HCT116 (cell line): ENCODE measurements at regions of chr5 and their contacts with region 1.

Region 1: DNA sequence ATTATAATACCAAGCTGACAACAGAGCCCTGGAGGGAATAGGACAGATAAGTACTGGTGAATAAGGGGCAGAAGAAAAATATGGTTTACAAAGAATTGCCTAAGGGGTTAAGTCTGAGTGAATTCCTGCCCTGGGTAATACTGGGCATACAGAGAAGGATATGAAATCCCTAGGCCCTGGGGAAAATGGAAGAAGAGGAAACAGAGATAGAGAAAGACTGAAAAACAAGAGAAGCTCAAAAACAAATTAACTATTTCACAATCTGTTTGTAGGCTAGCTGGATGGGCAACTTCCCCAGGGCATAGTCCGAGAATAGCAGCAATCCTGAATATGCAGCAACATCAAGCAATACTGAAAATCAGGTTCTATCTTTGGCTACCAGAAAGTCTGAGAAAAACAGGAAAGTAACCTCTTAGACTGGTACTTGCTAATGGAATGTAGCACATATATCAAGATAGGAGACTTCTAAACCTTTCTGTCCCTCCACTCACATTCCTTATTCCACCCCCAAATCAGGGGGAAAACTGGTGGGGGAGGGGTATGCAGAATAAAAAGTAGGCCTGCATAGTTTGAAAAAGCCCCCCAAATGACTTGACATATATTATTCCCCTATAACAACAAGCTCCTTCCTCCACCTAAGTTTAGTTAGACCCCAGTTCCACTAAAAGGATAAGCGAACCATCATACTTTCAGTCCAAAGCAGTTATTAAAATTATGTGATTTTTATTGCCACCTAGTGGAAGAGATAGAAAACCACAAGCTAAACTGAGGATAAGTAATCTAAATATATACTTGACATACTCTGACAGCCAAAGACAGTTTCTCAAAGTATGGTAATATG is 20.6 kb downstream of the SLC38A9 start:
- DNase-seq: peak; percentile 33
- ATAC-seq: peak; percentile 63; the same call in 1 of the 2 replicates
- H3K4me3 ChIP-seq: no peak overlapping the region
- H3K27ac ChIP-seq: no peak overlapping the region
- H3K4me1 ChIP-seq: no peaks in the 10 kb centered on the region
- H3K27me3 ChIP-seq: no peaks in the 10 kb centered on the region
- CTCF ChIP-seq: peak; percentile 46 to 76 (median 68); a peak in 5 of 6 replicates
- POLR2A ChIP-seq: no peak
- RAD21 ChIP-seq: peak; percentile 82

Region 2: DNA sequence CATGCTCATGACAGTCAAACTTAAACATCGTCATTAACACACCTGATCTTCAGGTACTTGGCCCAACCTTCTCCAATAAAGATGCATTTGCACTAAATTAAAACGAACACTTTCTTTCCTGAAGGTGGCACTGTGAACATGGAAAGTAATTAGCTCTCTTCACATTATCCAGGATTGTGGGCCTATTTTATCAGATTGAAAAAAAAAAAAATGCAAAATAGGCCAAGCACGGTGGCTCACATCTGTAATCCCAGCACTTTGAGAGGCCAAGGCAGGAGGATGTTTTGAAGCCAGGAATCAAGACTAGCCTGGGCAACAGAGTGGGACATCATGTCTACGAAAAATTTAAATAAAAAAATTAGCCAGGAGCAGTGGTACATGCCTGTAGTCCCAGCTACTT is 504.1 kb before region 1 on chr5:
- CTCF ChIA-PET with region 1: interaction called, 9 read pairs
- POLR2A ChIA-PET with region 1: no interaction called
- RAD21 ChIA-PET with region 1: no interaction called
- intact Hi-C with region 1: loop called (anchors 1 kb)
- DNase-seq: peak; percentile 57
- ATAC-seq: peak; percentile 95
- H3K4me3 ChIP-seq: no peak overlapping the region
- H3K27ac ChIP-seq: no peak overlapping the region
- H3K4me1 ChIP-seq: no peaks in the 10 kb centered on the region
- H3K27me3 ChIP-seq: no peaks in the 10 kb centered on the region
- CTCF ChIP-seq: peak; percentile 44 to 57 (median 47); a peak in 4 of 6 replicates
- POLR2A ChIP-seq: no peak
- RAD21 ChIP-seq: peak; percentile 80

Region 3: DNA sequence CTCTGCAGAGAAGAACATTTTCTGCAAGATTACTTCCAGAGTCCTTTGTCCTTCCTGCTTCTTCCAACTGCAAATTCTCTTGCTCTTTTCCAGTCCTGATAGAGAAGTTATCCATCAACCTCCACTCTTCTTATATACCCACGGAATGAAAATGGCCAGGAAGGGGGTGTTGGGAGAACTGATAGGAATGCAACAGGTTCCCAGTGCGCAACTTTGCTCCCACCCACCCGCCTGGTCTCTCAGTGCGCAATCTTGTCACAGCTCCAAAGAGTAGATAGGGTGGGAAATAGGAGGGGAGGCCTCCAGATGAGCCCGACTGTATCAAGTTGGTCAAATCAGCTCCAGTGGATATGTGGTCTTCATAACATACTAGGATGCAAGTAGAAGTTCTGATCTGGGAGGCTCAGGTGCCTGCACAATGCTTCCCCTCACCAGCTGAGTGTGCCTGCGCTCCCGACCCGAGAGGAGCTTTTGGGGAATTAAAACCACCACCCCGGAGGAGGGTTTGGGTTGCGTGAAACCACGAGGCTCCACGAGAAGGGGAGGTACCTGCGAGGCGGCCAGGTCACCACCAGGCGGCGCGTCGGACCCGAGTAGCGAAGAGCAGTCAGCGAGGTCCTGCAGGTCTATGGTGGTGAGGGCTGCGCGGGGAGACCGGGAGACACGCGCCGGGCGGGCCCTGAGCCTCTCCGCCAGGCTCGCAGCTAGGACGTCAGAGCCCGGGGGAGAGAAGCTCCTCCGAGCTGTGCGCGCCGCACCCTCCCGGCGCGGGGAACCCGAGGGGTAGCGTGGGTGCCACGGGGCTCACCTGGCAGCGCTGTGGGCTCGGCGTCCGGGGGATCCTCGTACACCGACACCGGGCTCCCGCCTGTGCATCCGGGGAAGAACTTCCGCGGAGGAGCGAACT is 465.2 kb before region 1 on chr5:
- CTCF ChIA-PET with region 1: interaction called, 8 read pairs
- POLR2A ChIA-PET with region 1: no interaction called
- RAD21 ChIA-PET with region 1: interaction called in 1 of 2 experiments, 3 read pairs
- intact Hi-C with region 1: loop called (anchors 2 kb)
- DNase-seq: peak; percentile 72
- ATAC-seq: peak; percentile 85
- H3K4me3 ChIP-seq: peak overlapping the region; percentile 62 to 75
- H3K27ac ChIP-seq: peak overlapping the region; percentile 92
- H3K4me1 ChIP-seq: peaks cover 10 to 19% of the 10 kb centered on the region in 2 experiments
- H3K27me3 ChIP-seq: no peaks in the 10 kb centered on the region
- CTCF ChIP-seq: peak in 2 of 3 experiments; percentile 83 to 92; a peak in 4 of 6 replicates
- POLR2A ChIP-seq: peak; percentile 71
- RAD21 ChIP-seq: no peak

Region 4: DNA sequence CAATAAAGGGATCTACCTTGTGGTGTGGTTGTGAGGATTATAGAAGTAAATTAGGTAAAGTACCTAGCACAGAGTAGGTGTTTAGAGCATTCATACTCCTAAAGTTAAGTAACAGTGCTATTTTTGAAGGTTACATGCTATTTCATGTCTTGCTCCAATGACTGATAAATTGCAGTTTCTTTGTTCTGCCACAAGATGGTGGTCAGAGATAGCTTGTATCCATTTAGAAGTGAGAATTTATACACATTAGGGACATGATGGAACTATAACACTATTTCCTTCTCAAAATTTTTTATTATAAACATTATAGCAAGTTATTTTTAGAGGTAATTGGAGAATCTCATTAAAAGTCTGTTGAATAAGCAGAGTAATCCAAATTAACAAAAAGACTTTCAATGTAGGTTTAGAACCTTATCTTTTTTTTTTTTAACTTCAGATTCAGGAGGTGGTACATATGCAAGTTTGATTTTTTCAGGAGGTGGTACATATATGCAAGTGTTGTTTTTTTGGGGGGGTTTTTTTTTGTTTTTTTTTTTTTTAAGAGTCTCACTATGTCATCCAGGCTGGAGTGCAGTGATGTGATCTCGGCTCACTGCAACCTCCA is 366.6 kb before region 1 on chr5:
- CTCF ChIA-PET with region 1: interaction called, 13 read pairs
- POLR2A ChIA-PET with region 1: no interaction called
- RAD21 ChIA-PET with region 1: no interaction called
- intact Hi-C with region 1: loop called (anchors 1 kb)
- DNase-seq: peak; percentile 32
- ATAC-seq: peak; percentile 72
- H3K4me3 ChIP-seq: no peak overlapping the region
- H3K27ac ChIP-seq: no peak overlapping the region
- H3K4me1 ChIP-seq: no peaks in the 10 kb centered on the region
- H3K27me3 ChIP-seq: no peaks in the 10 kb centered on the region
- CTCF ChIP-seq: peak; percentile 42 to 70 (median 48); a peak in 5 of 6 replicates
- POLR2A ChIP-seq: no peak
- RAD21 ChIP-seq: peak; percentile 69

Region 5: DNA sequence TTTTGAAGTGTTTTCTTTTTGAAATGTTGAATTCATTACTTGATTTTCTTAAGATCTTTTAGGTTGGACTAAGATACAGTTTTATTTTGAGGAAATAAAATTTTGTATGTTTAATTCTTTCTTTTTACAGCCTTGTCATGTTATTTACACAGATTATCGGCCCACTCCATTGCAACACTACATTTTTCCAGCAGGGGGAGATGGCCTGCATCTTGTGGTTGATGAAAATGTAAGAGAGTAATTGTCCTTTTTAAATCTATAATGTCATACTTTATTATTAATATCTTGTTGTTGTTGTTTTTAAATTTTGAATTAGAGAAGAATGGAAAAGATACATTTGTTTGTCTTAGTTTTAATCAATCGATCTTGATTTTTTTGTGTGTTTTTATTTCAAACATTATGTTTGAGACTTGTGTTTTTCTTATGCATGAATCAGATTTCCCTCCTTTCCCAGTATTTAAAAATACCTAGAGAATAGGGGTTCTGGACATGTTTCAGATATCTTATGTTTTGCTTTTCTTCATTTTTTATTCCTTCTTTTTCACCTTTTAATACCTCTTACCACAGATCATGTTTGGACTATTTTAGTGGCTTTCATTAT is 347.0 kb before region 1 on chr5:
- CTCF ChIA-PET with region 1: interaction called, 6 read pairs
- POLR2A ChIA-PET with region 1: no interaction called
- RAD21 ChIA-PET with region 1: no interaction called
- intact Hi-C with region 1: loop called (anchors 1 kb)
- DNase-seq: peak; percentile 36
- ATAC-seq: peak; percentile 47; the same call in 1 of the 2 replicates
- H3K4me3 ChIP-seq: no peak overlapping the region
- H3K27ac ChIP-seq: no peak overlapping the region
- H3K4me1 ChIP-seq: no peaks in the 10 kb centered on the region
- H3K27me3 ChIP-seq: no peaks in the 10 kb centered on the region
- CTCF ChIP-seq: peak; percentile 48 to 83 (median 72); a peak in 5 of 6 replicates
- POLR2A ChIP-seq: no peak
- RAD21 ChIP-seq: peak; percentile 58

Region 6: GRCh38 chr5:55407059-55407684 is 284.3 kb before region 1 on chr5:
- CTCF ChIA-PET with region 1: interaction called, 19 read pairs
- POLR2A ChIA-PET with region 1: no interaction called
- RAD21 ChIA-PET with region 1: no interaction called
- intact Hi-C with region 1: loop called (anchors 1 kb)
- DNase-seq: peak; percentile 22
- ATAC-seq: peak; percentile 84
- H3K4me3 ChIP-seq: no peak overlapping the region
- H3K27ac ChIP-seq: no peak overlapping the region
- H3K4me1 ChIP-seq: no peaks in the 10 kb centered on the region
- H3K27me3 ChIP-seq: no peaks in the 10 kb centered on the region
- CTCF ChIP-seq: peak; percentile 50 to 75 (median 72); a peak in 5 of 6 replicates
- POLR2A ChIP-seq: no peak
- RAD21 ChIP-seq: peak; percentile 69

Region 7: GRCh38 chr5:55903121-55903701 is 211.7 kb after region 1 on chr5:
- CTCF ChIA-PET with region 1: no interaction called
- POLR2A ChIA-PET with region 1: no interaction called
- RAD21 ChIA-PET with region 1: no interaction called
- intact Hi-C with region 1: no loop called
- DNase-seq: no peak
- ATAC-seq: no peak
- H3K4me3 ChIP-seq: no peak overlapping the region
- H3K27ac ChIP-seq: no peak overlapping the region
- H3K4me1 ChIP-seq: peaks cover 0 to 16% of the 10 kb centered on the region in 2 experiments; a peak in 2 of 4 replicates
- H3K27me3 ChIP-seq: no peaks in the 10 kb centered on the region
- CTCF ChIP-seq: no peak
- POLR2A ChIP-seq: no peak
- RAD21 ChIP-seq: no peak

Region 8: DNA sequence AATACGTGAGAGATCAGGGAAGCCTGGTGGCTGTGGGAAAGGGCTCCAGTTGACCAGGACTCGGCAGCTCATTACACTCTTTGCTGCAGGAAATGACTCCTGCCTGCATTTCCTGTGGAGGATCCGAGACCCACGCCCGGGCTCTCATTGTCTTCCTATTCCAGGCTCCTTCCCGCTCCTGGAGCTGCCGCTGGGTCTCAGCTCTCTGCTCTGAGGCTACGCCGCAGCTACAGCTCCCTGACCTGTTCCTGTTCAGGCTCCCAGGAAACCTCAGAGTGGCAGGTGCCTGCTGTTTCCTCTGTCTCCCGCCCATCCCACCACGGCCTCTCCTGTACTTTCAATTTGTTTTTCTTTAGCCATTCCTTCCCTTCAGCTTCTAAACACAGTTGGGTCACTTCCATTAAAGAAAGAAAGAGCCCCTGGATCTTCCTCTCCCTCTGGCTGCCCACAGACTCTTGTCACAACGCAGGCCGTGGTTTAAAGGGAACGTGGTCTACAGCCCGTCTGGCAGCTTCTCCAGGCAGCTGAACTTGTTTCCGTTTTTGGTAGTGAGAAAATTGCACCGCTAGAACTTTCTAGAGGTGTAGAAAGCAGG is 231.8 kb after region 1 on chr5:
- CTCF ChIA-PET with region 1: no interaction called
- POLR2A ChIA-PET with region 1: no interaction called
- RAD21 ChIA-PET with region 1: no interaction called
- intact Hi-C with region 1: loop called (anchors 5 kb)
- DNase-seq: no peak
- ATAC-seq: no peak
- H3K4me3 ChIP-seq: no peak overlapping the region
- H3K27ac ChIP-seq: no peak overlapping the region
- H3K4me1 ChIP-seq: no peaks in the 10 kb centered on the region
- H3K27me3 ChIP-seq: no peaks in the 10 kb centered on the region
- CTCF ChIP-seq: no peak
- POLR2A ChIP-seq: no peak
- RAD21 ChIP-seq: no peak